Kidney (tissue), 22 donors: ENCODE measurements at regions of chr6 and their contacts with region 1.

Region 1: DNA sequence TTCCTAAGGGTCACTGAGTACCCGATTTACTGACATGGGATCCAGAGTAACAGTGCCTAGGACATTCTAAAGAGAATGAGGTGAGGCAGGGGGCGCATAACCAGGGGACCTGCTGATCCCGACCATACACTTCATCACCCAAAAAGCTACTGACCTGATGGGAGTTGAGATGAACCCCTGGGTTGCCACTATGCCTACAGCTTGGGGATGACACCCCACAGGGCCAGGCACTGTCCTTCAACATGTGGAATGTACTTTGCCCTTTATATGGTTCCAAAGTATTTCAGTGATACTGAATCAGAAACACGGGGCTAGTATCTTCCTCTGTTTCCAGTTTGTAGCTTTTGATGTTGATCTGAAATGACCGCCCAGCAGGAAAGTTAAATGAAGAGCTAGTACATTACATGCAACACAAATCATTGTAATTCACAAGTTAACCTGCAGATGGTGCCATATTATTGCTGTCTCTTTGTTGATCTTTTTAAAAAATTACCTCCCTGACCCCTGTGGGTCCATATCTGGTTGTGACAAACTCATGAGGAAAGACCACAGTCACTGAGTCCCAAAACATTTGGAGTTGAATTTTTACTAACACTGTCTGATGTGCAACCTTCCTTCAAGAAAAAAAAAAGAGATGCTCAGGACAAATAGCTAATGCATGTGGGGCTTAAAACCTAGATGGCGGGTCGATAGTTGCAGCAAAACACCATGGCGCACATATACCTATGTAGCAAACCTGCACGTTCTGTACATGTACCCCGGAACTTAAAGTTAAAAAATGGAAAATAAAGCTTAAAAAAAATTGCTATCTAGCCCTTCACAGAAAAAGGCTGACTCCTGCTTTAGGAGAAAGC is 42.7 kb upstream of the GCNT2 start:
- DNase-seq: peak in 2 of 5 donors; percentile 49 to 53
- H3K4me3 ChIP-seq: no peak overlapping the region
- H3K27ac ChIP-seq: no peak overlapping the region
- H3K4me1 ChIP-seq: no peaks in the 10 kb centered on the region
- H3K27me3 ChIP-seq: no peaks in the 10 kb centered on the region
- CTCF ChIP-seq: peak; percentile 59

Region 2: GRCh38 chr6:10542213-10542612 is 63.8 kb after region 1 on chr6:
- intact Hi-C with region 1: no loop called
- DNase-seq: no peak
- H3K4me3 ChIP-seq: no peak overlapping the region
- H3K27ac ChIP-seq: no peak overlapping the region
- H3K4me1 ChIP-seq: peaks cover 0 to 13% (median 5%) of the 10 kb centered on the region in 3 donors
- H3K27me3 ChIP-seq: no peaks in the 10 kb centered on the region
- CTCF ChIP-seq: no peak

Region 3: GRCh38 chr6:10800829-10801535 is 322.6 kb after region 1 on chr6:
- intact Hi-C with region 1: loop called (anchors 10 kb)
- DNase-seq: peak in 4 of 5 donors; percentile 68 to 75 (median 70)
- H3K4me3 ChIP-seq: no peak overlapping the region
- H3K27ac ChIP-seq: no peak overlapping the region
- H3K4me1 ChIP-seq: no peaks in the 10 kb centered on the region
- H3K27me3 ChIP-seq: no peaks in the 10 kb centered on the region
- CTCF ChIP-seq: peak; percentile 90

Region 4: DNA sequence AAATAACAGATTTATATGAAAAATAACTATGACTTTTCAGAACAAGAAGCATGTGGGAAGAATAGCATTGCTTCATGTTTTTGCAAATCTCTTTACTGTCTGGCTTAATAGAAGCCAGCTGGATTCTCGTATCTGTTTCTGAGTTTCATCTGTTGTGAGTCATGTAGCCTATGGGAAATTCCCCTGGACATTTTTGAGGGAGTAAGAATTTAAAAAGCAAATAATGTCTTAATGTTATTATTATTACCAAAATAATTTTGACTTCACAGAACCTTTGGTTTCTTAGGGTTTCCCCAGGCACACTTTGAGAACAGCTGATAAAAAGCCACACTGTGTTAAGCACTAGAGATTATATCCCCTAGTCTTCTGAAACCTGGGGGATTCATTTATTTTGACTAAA is 484.3 kb after region 1 on chr6:
- intact Hi-C with region 1: no loop called
- DNase-seq: peak in 2 of 5 donors; percentile 15 to 35
- H3K4me3 ChIP-seq: no peak overlapping the region
- H3K27ac ChIP-seq: no peak overlapping the region
- H3K4me1 ChIP-seq: no peaks in the 10 kb centered on the region
- H3K27me3 ChIP-seq: no peaks in the 10 kb centered on the region
- CTCF ChIP-seq: no peak